Activated CD4-positive, alpha-beta T cell treated with anti-CD3 and anti-CD28 coated beads for 36 hours (primary cell): ENCODE measurements at regions of chr1 and their contacts with region 1.

Region 1: DNA sequence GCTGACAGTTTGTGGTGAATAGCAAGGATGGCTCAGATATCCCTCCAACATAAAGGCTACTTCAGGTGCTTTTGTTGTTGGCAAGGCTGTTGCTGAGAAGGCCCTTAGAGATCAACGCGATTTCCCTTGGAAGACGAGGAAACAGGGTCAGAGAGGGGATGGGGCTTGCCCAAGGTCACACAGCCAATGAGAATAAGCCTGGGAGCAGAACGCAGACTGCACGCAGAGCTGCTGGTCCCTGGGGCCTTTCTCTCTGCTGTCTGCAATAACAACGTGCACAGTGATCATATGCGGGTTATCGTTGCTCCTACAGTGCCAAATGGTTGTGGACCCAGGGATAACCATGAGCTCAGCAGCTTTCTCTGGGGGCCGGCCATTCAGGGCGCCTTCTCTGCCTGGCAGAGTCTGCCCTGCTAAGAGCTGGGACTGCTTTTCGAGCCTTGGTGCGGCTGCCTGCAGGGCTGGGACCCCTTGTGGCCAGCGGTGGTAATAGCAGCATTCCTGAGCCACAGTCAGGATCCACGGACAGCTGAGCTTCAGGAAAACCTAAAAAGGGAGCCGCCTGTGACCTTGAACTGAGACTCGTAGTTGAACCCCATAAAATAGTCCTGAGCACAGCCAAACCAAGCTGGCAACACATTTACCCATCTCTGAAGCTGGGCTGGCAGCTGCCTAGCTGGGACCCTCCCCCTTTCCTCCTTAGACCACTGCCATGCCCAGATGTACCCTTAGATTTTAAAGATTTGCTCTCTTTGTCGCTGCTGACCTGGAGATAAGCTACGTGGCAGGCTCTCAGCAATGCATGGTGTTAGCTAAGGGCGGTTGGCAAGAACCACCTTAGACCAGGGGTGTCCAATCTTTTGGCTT is 39.8 kb downstream of the HTR6 start:
- DNase-seq: peak; percentile 77
- ATAC-seq: peak; percentile 75
- H3K4me3 Mint-ChIP-seq: no peak overlapping the region
- H3K27ac Mint-ChIP-seq: no peak overlapping the region
- H3K4me1 Mint-ChIP-seq: peaks cover 18% of the 10 kb centered on the region
- H3K27me3 Mint-ChIP-seq: no peaks in the 10 kb centered on the region

Region 2: DNA sequence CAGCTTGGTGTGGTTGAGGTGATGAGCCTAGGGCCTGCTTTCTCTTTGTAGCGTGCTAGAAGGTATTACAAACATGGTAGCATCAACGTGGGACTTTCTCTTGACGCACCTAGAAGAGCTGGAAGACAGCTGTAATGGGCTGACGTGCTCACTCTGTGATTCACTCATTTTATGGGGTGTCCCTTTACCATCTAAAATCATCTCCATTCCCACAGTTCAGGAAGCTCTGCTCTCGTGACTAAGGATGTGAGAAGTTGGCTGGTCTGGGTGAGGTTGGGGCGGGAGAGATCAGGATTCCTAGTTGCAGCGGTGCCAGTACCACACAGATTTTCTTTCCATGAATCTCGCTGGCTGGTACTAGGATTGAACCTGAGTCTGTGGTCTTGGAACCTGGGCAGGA is 35.6 kb before region 1 on chr1:
- CTCF ChIA-PET with region 1: interaction called, 151 read pairs
- POLR2A ChIA-PET with region 1: no interaction called
- intact Hi-C with region 1: no loop called
- DNase-seq: no peak
- ATAC-seq: no peak
- H3K4me3 Mint-ChIP-seq: no peak overlapping the region
- H3K27ac Mint-ChIP-seq: no peak overlapping the region
- H3K4me1 Mint-ChIP-seq: peaks cover 22% of the 10 kb centered on the region
- H3K27me3 Mint-ChIP-seq: peaks cover 29% of the 10 kb centered on the region

Region 3: GRCh38 chr1:19689856-19690255 is 14.6 kb before region 1 on chr1:
- CTCF ChIA-PET with region 1: interaction called, 13 read pairs
- POLR2A ChIA-PET with region 1: no interaction called
- intact Hi-C with region 1: no loop called
- DNase-seq: peak; percentile 14
- ATAC-seq: no peak
- H3K4me3 Mint-ChIP-seq: no peak overlapping the region
- H3K27ac Mint-ChIP-seq: no peak overlapping the region
- H3K4me1 Mint-ChIP-seq: peaks cover 28% of the 10 kb centered on the region
- H3K27me3 Mint-ChIP-seq: no peaks in the 10 kb centered on the region

Region 4: DNA sequence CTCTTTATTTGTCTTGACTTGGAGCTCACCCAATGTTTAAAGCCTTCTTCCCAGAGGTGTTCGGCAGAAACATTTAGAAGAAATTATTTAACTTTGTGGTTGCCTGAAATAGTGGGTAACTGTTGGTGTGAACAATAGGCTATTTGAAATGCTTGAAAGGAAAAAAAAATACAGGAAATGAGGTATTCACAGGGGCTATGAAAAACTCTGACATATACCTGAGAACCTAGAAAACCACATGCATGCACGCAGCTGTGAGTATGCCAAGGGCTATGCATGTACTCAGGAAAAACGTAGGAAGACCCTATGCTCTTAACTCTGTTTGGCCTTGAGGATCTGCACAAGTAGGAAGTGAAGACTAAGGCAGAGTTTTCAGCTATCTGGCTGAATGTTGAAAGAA is 127.0 kb after region 1 on chr1:
- CTCF ChIA-PET with region 1: no interaction called
- POLR2A ChIA-PET with region 1: no interaction called
- intact Hi-C with region 1: no loop called
- DNase-seq: no peak
- ATAC-seq: no peak
- H3K4me3 Mint-ChIP-seq: no peak overlapping the region
- H3K27ac Mint-ChIP-seq: no peak overlapping the region
- H3K4me1 Mint-ChIP-seq: no peaks in the 10 kb centered on the region
- H3K27me3 Mint-ChIP-seq: peaks cover 38% of the 10 kb centered on the region